HepG2 (cell line): ENCODE measurements at regions of chr22 and their contacts with region 1.

Region 1: GRCh38 chr22:27093422-27093821 is 436.0 kb downstream of the MIAT start:
- DNase-seq: no peak
- ATAC-seq: no peak
- H3K4me3 ChIP-seq: no peak overlapping the region
- H3K27ac ChIP-seq: no peak overlapping the region
- H3K4me1 ChIP-seq: no peaks in the 10 kb centered on the region
- H3K27me3 ChIP-seq: no peaks in the 10 kb centered on the region
- CTCF ChIP-seq: no peak
- EP300 ChIP-seq: no peak
- POLR2A ChIP-seq: no peak
- RAD21 ChIP-seq: no peak

Region 2: GRCh38 chr22:27075028-27075678 is 18.3 kb before region 1 on chr22:
- CTCF ChIA-PET with region 1: no interaction called
- POLR2A ChIA-PET with region 1: no interaction called
- in situ Hi-C with region 1: no loop called
- intact Hi-C with region 1: loop called (anchors 2 kb)
- DNase-seq: no peak
- ATAC-seq: no peak
- H3K4me3 ChIP-seq: no peak overlapping the region
- H3K27ac ChIP-seq: no peak overlapping the region
- H3K4me1 ChIP-seq: peaks cover 9% of the 10 kb centered on the region; the same call in 1 of the 2 replicates
- H3K27me3 ChIP-seq: no peaks in the 10 kb centered on the region
- CTCF ChIP-seq: no peak
- EP300 ChIP-seq: no peak
- POLR2A ChIP-seq: no peak
- RAD21 ChIP-seq: no peak

Region 3: DNA sequence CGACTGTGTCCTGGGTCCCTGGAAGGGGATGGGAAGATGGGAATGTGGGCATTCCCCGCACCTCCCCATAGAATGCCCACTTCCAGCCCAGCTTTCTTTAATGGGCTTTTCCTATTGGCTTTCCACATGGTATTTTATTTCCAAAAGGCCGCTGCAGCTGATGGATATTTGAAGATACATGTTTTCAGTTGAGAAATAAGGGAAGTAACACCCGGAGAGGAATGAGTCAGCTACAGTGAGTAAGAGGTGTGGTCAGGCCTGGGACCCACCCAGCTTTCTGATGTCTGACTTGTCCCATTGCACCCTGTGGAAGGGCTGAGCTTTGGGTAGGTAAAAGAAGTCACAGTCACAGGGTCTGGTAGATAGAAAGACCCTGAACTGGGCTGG is 40.9 kb after region 1 on chr22:
- CTCF ChIA-PET with region 1: no interaction called
- POLR2A ChIA-PET with region 1: no interaction called
- in situ Hi-C with region 1: no loop called
- intact Hi-C with region 1: no loop called
- DNase-seq: no peak
- ATAC-seq: no peak
- H3K4me3 ChIP-seq: no peak overlapping the region
- H3K27ac ChIP-seq: no peak overlapping the region
- H3K4me1 ChIP-seq: no peaks in the 10 kb centered on the region
- H3K27me3 ChIP-seq: peaks cover 3 to 13% of the 10 kb centered on the region in 2 experiments; a peak in 3 of 5 replicates
- CTCF ChIP-seq: no peak
- EP300 ChIP-seq: no peak
- POLR2A ChIP-seq: no peak
- RAD21 ChIP-seq: no peak